ENCODE measurements at regions of chr14 and their contacts with region 1.

Region 1: DNA sequence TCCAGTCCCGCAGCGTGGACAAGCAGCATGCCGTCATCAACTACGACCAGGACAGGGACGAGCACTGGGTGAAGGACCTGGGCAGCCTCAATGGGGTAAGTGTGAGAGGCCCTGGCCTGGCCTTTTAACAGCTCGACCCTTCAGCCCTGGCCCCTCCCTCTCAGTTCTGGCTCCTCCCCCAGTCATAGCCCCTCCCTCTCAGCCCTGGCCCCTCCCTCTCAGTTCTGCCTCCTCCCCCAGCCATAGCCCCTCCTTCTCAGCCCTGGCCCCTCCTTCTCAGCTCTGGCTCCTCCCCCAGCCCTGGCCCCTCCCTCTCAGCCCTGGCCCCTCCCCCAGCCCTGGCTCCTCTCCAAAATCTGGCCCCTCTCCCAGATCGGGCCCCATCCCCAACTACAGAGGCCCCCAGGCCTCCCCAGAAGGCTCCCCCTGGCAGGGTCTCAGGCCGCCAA is 11.2 kb downstream of the CEP170B start:
- DNase-seq: peak in 3 of 9 donors; percentile 14 to 56 (median 32)
- ATAC-seq: peak; percentile 87
- H3K4me3 ChIP-seq: no peak overlapping the region
- H3K4me3 Mint-ChIP-seq: no peak overlapping the region
- H3K27ac ChIP-seq: no peak overlapping the region
- H3K27ac Mint-ChIP-seq: no peak overlapping the region
- H3K4me1 ChIP-seq: no peaks in the 10 kb centered on the region
- H3K4me1 Mint-ChIP-seq: peaks cover 0 to 8% (median 4%) of the 10 kb centered on the region in 7 donors
- H3K27me3 ChIP-seq: no peaks in the 10 kb centered on the region
- H3K27me3 Mint-ChIP-seq: no peaks in the 10 kb centered on the region

Region 2: GRCh38 chr14:104865644-104866441 is 10.4 kb before region 1 on chr14:
- CTCF ChIA-PET with region 1: no interaction called
- POLR2A ChIA-PET with region 1: no interaction called
- intact Hi-C with region 1: loop called in 1 of 2 experiments (anchors 1 kb)
- DNase-seq: peak in 1 of 9 donors; percentile 67
- ATAC-seq: peak; percentile 36
- H3K4me3 ChIP-seq: peak overlapping the region; percentile 24
- H3K4me3 Mint-ChIP-seq: peak overlapping the region in 9 of 10 donors; percentile 16 to 79 (median 69)
- H3K27ac ChIP-seq: peak overlapping the region; percentile 25
- H3K27ac Mint-ChIP-seq: peak overlapping the region in 1 of 9 donors; percentile 18
- H3K4me1 ChIP-seq: no peaks in the 10 kb centered on the region
- H3K4me1 Mint-ChIP-seq: peaks cover 0 to 9% (median 4%) of the 10 kb centered on the region in 7 donors
- H3K27me3 ChIP-seq: no peaks in the 10 kb centered on the region
- H3K27me3 Mint-ChIP-seq: peaks cover 0 to 23% (median 7%) of the 10 kb centered on the region in 5 donors